HAP-1 (cell line): ENCODE measurements at regions of chr2 and their contacts with region 1.

Region 1: DNA sequence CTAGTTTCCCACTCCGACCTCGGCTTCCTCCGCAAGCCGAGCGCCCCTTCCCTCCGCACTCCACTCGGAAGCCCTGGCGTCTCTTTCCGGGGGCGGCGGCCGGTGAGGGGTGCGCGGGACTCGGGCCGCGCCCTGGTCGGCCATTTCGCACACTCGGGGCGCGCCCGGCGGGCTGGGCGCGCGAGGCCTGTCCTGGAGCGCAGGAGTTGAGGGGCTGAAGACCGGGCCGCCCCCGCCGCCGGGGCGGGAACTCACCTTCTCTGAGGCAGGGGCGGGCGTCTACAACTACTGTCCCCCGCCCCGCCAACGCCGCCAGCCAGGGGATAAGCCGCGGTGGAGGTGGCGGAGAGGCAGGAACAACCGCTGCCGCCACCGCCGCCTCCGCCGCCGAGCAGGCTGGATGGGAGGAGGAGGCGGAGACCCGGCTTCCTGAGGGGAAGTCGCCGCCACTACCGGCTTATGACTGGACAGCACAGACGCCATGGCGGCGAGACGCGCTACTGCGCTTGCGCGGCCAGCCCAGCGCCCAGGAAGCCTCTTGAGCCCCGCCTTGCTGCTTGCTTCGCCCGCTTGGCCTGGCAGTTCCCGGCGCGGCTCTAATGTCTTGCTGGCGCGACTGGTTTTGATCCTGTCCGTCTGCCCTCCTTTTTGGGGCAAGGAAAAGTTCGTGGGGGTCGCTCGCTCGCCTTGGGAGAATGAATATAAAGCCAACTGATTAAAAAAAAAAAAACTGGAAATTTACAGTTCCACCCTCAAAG is at the start of gene KRCC1:
- DNase-seq: peak; percentile 84 to 92
- H3K4me3 ChIP-seq: peak within 1 kb of the TSS; percentile 84
- H3K4me1 ChIP-seq: peaks cover 13% of the 10 kb centered on the region
- H3K27me3 ChIP-seq: no peaks in the 10 kb centered on the region

Region 2: GRCh38 chr2:88159955-88160415 is 104.4 kb after region 1 on chr2:
- in situ Hi-C with region 1: no loop called
- DNase-seq: peak; percentile 56
- H3K4me3 ChIP-seq: no peak overlapping the region
- H3K4me1 ChIP-seq: no peaks in the 10 kb centered on the region
- H3K27me3 ChIP-seq: no peaks in the 10 kb centered on the region

Region 3: GRCh38 chr2:88451811-88452565 is 396.4 kb after region 1 on chr2:
- in situ Hi-C with region 1: loop called (anchors 25 kb)
- DNase-seq: peak in 1 of 2 experiments; percentile 48
- H3K4me3 ChIP-seq: peak overlapping the region; percentile 55
- H3K4me1 ChIP-seq: peaks cover 10% of the 10 kb centered on the region; the same call in 1 of the 2 replicates
- H3K27me3 ChIP-seq: no peaks in the 10 kb centered on the region

Region 4: DNA sequence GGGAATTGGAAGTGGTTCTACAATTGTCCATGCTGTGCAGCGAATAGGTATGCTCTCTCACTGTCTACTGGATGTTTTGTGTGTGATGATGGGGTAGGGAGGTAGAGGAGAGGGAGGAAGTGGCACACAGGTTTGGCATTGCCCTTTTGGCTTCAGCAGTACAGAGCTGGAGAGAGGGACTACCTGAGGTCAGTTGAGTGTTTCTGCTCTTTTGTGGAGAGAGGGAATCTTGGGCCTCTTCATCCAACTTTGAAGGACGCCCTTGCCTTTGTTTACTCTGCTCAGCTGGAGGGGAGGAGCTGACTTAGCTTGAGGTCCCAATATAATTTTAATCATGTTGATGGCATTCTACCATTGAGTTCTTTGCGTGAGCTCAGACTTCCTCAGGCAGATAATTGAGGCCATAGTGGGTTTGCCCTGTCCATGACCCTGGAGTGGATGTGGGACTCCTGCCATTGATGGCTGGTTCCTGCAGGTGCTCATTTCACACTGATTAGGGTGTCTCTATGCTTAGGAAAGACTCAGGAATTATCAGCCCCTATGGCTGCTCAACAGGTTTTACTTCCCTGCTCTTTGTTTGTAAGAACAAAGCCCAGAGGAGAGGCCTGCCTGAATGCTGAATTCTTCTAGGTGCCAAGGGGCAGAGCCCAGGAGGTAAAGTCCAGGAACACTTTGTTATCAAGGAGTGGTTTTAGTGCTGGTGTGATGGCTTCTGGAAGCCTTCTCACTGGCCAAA is 643.1 kb after region 1 on chr2:
- in situ Hi-C with region 1: no loop called
- DNase-seq: no peak
- H3K4me3 ChIP-seq: no peak overlapping the region
- H3K4me1 ChIP-seq: peaks cover 5% of the 10 kb centered on the region; the same call in 1 of the 2 replicates
- H3K27me3 ChIP-seq: no peaks in the 10 kb centered on the region